A673 (cell line): ENCODE measurements at regions of chr1 and their contacts with region 1.

Region 1: GRCh38 chr1:79259388-79260336 is 253.1 kb upstream of the ADGRL4 start:
- DNase-seq: peak; percentile 68
- H3K4me3 ChIP-seq: no peak overlapping the region
- H3K27ac ChIP-seq: no peak overlapping the region
- H3K4me1 ChIP-seq: peaks cover 36% of the 10 kb centered on the region
- H3K27me3 ChIP-seq: no peaks in the 10 kb centered on the region
- CTCF ChIP-seq: peak; percentile 80

Region 2: GRCh38 chr1:79353224-79353623 is 93.6 kb after region 1 on chr1:
- CTCF ChIA-PET with region 1: interaction called, 5 read pairs
- POLR2A ChIA-PET with region 1: no interaction called
- intact Hi-C with region 1: loop called (anchors 2 kb)
- DNase-seq: peak; percentile 76
- H3K4me3 ChIP-seq: no peak overlapping the region
- H3K27ac ChIP-seq: no peak overlapping the region
- H3K4me1 ChIP-seq: no peaks in the 10 kb centered on the region
- H3K27me3 ChIP-seq: no peaks in the 10 kb centered on the region
- CTCF ChIP-seq: peak; percentile 80

Region 3: GRCh38 chr1:79568412-79568811 is 308.8 kb after region 1 on chr1:
- CTCF ChIA-PET with region 1: no interaction called
- POLR2A ChIA-PET with region 1: no interaction called
- intact Hi-C with region 1: no loop called
- DNase-seq: no peak
- H3K4me3 ChIP-seq: no peak overlapping the region
- H3K27ac ChIP-seq: no peak overlapping the region
- H3K4me1 ChIP-seq: no peaks in the 10 kb centered on the region
- H3K27me3 ChIP-seq: no peaks in the 10 kb centered on the region
- CTCF ChIP-seq: no peak

Region 4: DNA sequence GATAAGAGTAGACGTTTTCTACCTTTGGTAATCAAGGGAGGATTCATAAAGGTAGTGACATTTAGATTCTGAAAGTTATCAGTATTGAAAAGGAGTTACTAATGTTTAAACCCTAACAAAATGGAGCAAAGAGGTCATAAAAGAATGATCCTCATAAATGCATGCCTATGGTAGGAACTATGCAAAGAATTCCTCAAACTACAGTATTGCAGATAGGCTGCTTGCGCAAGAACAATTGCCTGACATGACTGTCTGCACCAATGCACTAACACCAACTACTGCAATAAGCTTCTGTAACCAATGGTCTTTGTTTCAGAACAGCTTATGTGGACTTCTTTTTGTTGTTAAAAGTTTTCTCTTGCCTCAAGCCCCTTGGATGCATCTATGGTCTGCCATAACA is 344.2 kb after region 1 on chr1:
- CTCF ChIA-PET with region 1: no interaction called
- POLR2A ChIA-PET with region 1: no interaction called
- intact Hi-C with region 1: loop called (anchors 10 kb)
- DNase-seq: peak; percentile 26
- H3K4me3 ChIP-seq: no peak overlapping the region
- H3K27ac ChIP-seq: no peak overlapping the region
- H3K4me1 ChIP-seq: peaks cover 11% of the 10 kb centered on the region
- H3K27me3 ChIP-seq: no peaks in the 10 kb centered on the region
- CTCF ChIP-seq: no peak

Region 5: GRCh38 chr1:80218112-80218511 is 958.5 kb after region 1 on chr1:
- CTCF ChIA-PET with region 1: no interaction called
- POLR2A ChIA-PET with region 1: no interaction called
- intact Hi-C with region 1: loop called (anchors 10 kb)
- DNase-seq: peak; percentile 67
- H3K4me3 ChIP-seq: no peak overlapping the region
- H3K27ac ChIP-seq: no peak overlapping the region
- H3K4me1 ChIP-seq: no peaks in the 10 kb centered on the region
- H3K27me3 ChIP-seq: no peaks in the 10 kb centered on the region
- CTCF ChIP-seq: peak; percentile 65